Psoas muscle (tissue), 8 donors: ENCODE measurements at regions of chr5 and their contacts with region 1.

Region 1: DNA sequence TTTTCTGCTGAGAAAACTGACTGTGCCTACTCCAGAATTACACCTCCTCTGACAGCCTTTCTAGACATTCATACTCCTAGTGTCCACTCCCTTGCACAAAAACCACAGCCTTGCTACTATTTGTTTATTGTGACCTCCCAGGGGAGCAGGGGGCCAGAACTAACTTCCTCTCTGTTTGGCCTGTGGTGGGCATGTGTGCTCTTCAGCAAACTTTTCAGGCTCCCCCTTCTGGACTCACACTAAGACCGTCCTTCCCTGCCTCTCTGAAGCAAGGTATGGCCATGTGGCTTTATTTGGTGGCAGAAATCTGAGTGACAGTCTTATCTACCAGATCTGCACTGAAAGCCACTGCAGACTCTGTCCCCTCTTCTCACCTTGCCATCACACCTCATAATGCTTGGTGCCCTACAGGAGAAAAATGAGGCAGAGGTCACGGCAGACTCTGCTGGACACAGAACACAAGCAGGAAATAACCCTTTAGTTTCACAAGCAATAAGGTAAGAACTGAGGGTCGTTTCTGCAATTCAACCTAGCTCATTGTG is 28.2 kb downstream of the LIFR start:
- DNase-seq: no peak
- ATAC-seq: no peak
- H3K4me3 ChIP-seq: no peak overlapping the region
- H3K27ac ChIP-seq: no peak overlapping the region
- H3K4me1 ChIP-seq: peaks cover 25% of the 10 kb centered on the region
- H3K27me3 ChIP-seq: no peaks in the 10 kb centered on the region
- CTCF ChIP-seq: no peak

Region 2: DNA sequence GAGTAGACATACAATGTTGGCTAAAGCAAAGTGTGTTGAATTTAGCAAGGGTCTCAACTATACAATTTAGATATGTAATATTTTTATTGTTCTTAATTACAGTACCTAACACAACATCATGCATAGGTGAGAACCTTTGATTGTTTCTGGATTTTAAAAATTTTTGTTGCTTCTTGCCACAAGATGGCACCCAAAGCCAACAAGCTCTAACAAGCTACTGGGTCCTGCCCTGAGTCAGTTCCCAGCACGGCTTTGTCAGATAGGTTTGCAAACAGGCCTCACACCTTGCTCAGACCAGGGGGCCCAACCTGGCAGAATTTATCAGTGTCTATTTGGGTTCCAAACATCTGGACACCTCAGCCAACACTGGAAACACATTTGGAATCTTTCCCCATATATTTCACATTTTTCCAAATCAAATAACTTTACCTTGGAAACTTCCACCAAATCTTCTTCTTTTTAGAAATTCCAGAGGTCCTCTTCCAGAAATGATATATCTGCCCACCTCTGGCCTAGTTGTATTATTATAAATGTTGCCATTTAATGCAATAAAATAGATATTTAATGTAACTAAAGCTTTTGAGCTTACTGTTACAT is 319.4 kb before region 1 on chr5:
- intact Hi-C with region 1: loop called in 1 of 2 experiments (anchors 10 kb)
- DNase-seq: no peak
- ATAC-seq: peak in 1 of 4 donors; percentile 46
- H3K4me3 ChIP-seq: no peak overlapping the region
- H3K27ac ChIP-seq: no peak overlapping the region
- H3K4me1 ChIP-seq: no peaks in the 10 kb centered on the region
- H3K27me3 ChIP-seq: peaks cover 0 to 2% (median 0%) of the 10 kb centered on the region in 3 donors
- CTCF ChIP-seq: peak; percentile 44

Region 3: DNA sequence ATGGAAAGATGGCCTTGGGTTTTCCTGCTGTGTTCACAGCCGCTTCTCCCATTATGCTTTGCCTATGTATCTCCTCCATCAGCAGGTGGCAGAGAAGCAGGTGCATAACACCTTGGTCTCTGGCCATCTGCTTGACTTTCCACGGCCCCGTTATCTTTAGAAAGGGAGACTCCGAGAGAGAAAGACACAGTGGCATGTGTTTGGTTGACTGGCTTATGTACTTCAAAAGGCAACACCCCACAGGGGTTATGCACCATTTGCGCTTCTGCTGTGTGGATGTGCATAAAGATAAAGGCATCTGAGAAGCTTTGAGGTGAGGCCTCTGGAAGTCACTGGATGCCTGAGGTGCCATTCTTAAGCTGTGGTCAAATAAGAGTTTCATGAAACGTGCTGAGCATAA is 131.5 kb before region 1 on chr5:
- intact Hi-C with region 1: no loop called
- DNase-seq: no peak
- ATAC-seq: no peak
- H3K4me3 ChIP-seq: no peak overlapping the region
- H3K27ac ChIP-seq: no peak overlapping the region
- H3K4me1 ChIP-seq: no peaks in the 10 kb centered on the region
- H3K27me3 ChIP-seq: no peaks in the 10 kb centered on the region
- CTCF ChIP-seq: no peak

Region 4: DNA sequence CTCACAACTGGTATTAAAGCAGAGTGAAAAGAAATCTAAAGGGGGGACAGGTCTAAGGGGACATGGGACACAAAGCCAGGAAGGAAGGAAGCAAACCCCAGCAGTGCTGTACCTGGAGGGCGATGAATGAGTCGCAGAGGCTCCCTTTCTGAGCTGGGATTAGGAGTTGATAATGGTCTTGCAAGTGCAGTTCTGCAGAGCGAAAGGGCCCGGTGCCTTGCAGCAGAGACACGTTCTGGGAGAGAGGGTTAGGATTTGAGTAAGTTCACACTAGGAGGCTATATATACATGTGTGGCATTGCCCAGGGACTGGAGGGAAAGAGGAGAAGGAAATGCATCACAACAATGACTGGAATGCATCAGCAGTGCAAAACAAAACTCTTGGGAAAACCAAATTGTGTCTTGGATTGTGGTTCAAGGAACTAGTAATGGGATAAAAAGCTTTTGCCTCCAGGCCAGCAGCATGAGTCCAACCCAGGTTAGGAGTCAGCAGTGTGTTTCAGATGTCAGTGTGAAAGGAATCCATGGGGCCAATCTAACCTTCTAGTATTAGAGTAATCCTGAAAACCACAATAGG is 67.0 kb after region 1 on chr5:
- intact Hi-C with region 1: no loop called
- DNase-seq: no peak
- ATAC-seq: no peak
- H3K4me3 ChIP-seq: no peak overlapping the region
- H3K27ac ChIP-seq: no peak overlapping the region
- H3K4me1 ChIP-seq: peaks cover 32% of the 10 kb centered on the region
- H3K27me3 ChIP-seq: no peaks in the 10 kb centered on the region
- CTCF ChIP-seq: no peak